ENCODE measurements at regions of chr12 and their contacts with region 1.

Region 1: GRCh38 chr12:22993609-22994315 is 368.8 kb downstream of the ETNK1 start:
- DNase-seq: no peak
- ATAC-seq: no peak
- H3K4me3 ChIP-seq: no peak overlapping the region
- H3K27ac ChIP-seq: no peak overlapping the region
- H3K4me1 ChIP-seq: no peaks in the 10 kb centered on the region
- H3K27me3 ChIP-seq: no peaks in the 10 kb centered on the region; the same call in none of the 2 replicates
- CTCF ChIP-seq: no peak
- POLR2A ChIP-seq: no peak
- RAD21 ChIP-seq: no peak

Region 2: DNA sequence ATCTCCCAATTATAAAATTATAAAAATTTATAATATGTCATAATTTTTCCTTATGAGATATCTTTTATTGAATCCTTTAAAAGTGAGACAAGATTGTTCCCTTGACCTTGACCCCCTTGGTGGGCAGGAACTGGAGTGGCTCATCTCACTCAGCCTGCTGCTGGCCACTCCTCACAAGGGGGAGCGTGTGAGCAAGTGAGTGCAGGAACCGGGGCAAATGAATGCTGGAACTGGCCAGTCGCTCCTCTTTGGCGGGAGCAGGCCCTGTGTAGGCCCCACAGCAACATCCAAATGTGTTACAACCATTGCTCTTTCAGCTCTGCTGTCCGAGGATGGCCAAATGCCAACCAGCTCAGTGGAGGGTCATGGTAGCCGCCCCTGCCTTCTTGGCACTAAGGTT is 190.0 kb before region 1 on chr12:
- CTCF ChIA-PET with region 1: no interaction called
- POLR2A ChIA-PET with region 1: no interaction called
- dilution Hi-C with region 1: no loop called
- in situ Hi-C with region 1: no loop called
- intact Hi-C with region 1: no loop called
- DNase-seq: no peak
- ATAC-seq: no peak
- H3K4me3 ChIP-seq: no peak overlapping the region
- H3K27ac ChIP-seq: no peak overlapping the region
- H3K4me1 ChIP-seq: no peaks in the 10 kb centered on the region
- H3K27me3 ChIP-seq: no peaks in the 10 kb centered on the region
- CTCF ChIP-seq: no peak
- POLR2A ChIP-seq: no peak
- RAD21 ChIP-seq: no peak

Region 3: GRCh38 chr12:23028158-23028802 is 34.5 kb after region 1 on chr12:
- CTCF ChIA-PET with region 1: no interaction called
- POLR2A ChIA-PET with region 1: no interaction called
- dilution Hi-C with region 1: no loop called
- in situ Hi-C with region 1: no loop called
- intact Hi-C with region 1: loop called (anchors 2 kb)
- DNase-seq: peak; percentile 12
- ATAC-seq: no peak
- H3K4me3 ChIP-seq: no peak overlapping the region
- H3K27ac ChIP-seq: no peak overlapping the region
- H3K4me1 ChIP-seq: no peaks in the 10 kb centered on the region
- H3K27me3 ChIP-seq: peaks cover 5% of the 10 kb centered on the region
- CTCF ChIP-seq: no peak
- POLR2A ChIP-seq: no peak
- RAD21 ChIP-seq: no peak